ENCODE measurements at regions of chr1 and their contacts with region 1.

Region 1: GRCh38 chr1:203326830-203327683 is 21.7 kb downstream of the BTG2 start:
- DNase-seq: peak; percentile 95
- ATAC-seq: peak; percentile 67
- H3K4me3 ChIP-seq: peak overlapping the region; percentile 35 to 77 (median 56)
- H3K4me3 Mint-ChIP-seq: peak overlapping the region; percentile 88
- H3K27ac ChIP-seq: peak overlapping the region; percentile 96 to 97
- H3K27ac Mint-ChIP-seq: peak overlapping the region; percentile 98
- H3K4me1 ChIP-seq: peaks cover 56 to 62% of the 10 kb centered on the region in 2 donors
- H3K4me1 Mint-ChIP-seq: peaks cover 71% of the 10 kb centered on the region
- H3K27me3 ChIP-seq: no peaks in the 10 kb centered on the region
- H3K27me3 Mint-ChIP-seq: no peaks in the 10 kb centered on the region
- CTCF ChIP-seq: no peak

Region 2: GRCh38 chr1:203290261-203291089 is 36.6 kb before region 1 on chr1:
- CTCF ChIA-PET with region 1: interaction called, 1,776 read pairs
- POLR2A ChIA-PET with region 1: interaction called, 268 read pairs
- intact Hi-C with region 1: loop called (anchors 1 kb)
- DNase-seq: peak; percentile 98
- ATAC-seq: peak; percentile 40
- H3K4me3 ChIP-seq: peak overlapping the region; percentile 45 to 66 (median 56)
- H3K4me3 Mint-ChIP-seq: peak overlapping the region; percentile 88
- H3K27ac ChIP-seq: peak overlapping the region; percentile 99 to 100
- H3K27ac Mint-ChIP-seq: peak overlapping the region; percentile 95
- H3K4me1 ChIP-seq: peaks cover 70 to 90% of the 10 kb centered on the region in 2 donors
- H3K4me1 Mint-ChIP-seq: peaks cover 87% of the 10 kb centered on the region
- H3K27me3 ChIP-seq: no peaks in the 10 kb centered on the region
- H3K27me3 Mint-ChIP-seq: no peaks in the 10 kb centered on the region
- CTCF ChIP-seq: no peak

Region 3: DNA sequence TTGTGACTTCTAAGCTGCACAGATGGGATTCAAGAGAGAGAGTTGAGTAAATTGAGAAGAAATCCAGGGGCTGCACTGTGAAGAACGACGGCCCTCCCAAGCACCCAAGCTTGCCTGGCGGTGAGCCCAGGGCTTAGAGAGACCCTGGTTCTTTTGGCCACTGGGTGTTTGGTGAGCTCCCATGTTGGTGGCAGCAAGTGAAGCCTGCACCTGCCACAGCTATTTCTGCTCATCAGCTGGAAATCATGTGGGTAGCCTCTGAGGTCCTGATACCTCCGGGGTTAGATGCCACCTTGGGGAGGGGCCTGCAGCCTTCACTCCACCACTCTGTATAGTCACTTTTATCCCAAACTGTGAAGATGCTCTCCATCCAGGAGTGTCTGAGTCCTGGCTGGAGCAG is 27.9 kb before region 1 on chr1:
- CTCF ChIA-PET with region 1: interaction called, 1,776 read pairs
- POLR2A ChIA-PET with region 1: interaction called, 68 read pairs
- intact Hi-C with region 1: no loop called
- DNase-seq: peak; percentile 79
- ATAC-seq: peak; percentile 70
- H3K4me3 ChIP-seq: peak overlapping the region in 3 of 5 experiments; percentile 4 to 26 (median 5)
- H3K4me3 Mint-ChIP-seq: peak overlapping the region; percentile 68
- H3K27ac ChIP-seq: peak overlapping the region; percentile 76 to 87
- H3K27ac Mint-ChIP-seq: peak overlapping the region; percentile 93
- H3K4me1 ChIP-seq: peaks cover 87 to 100% of the 10 kb centered on the region in 2 donors
- H3K4me1 Mint-ChIP-seq: peaks cover 91% of the 10 kb centered on the region
- H3K27me3 ChIP-seq: no peaks in the 10 kb centered on the region
- H3K27me3 Mint-ChIP-seq: no peaks in the 10 kb centered on the region
- CTCF ChIP-seq: no peak

Region 4: GRCh38 chr1:203304919-203305808 is 21.9 kb before region 1 on chr1 and contains the start of gene BTG2:
- CTCF ChIA-PET with region 1: interaction called, 361 read pairs
- POLR2A ChIA-PET with region 1: interaction called, 687 read pairs
- intact Hi-C with region 1: loop called (anchors 1 kb)
- DNase-seq: peak; percentile 96
- ATAC-seq: peak; percentile 80
- H3K4me3 ChIP-seq: peak within 1 kb of the TSS; percentile 96 to 99 (median 99)
- H3K4me3 Mint-ChIP-seq: peak within 1 kb of the TSS; percentile 99
- H3K27ac ChIP-seq: peak within 1 kb of the TSS; percentile 100
- H3K27ac Mint-ChIP-seq: peak within 1 kb of the TSS; percentile 99
- H3K4me1 ChIP-seq: peaks cover 65 to 78% of the 10 kb centered on the region in 2 donors
- H3K4me1 Mint-ChIP-seq: peaks cover 70% of the 10 kb centered on the region
- H3K27me3 ChIP-seq: no peaks in the 10 kb centered on the region
- H3K27me3 Mint-ChIP-seq: no peaks in the 10 kb centered on the region
- CTCF ChIP-seq: no peak
- total RNA-seq, gene BTG2: 505 and 508 TPM in 2 replicates

Region 5: GRCh38 chr1:203381151-203381751 is 54.2 kb after region 1 on chr1:
- CTCF ChIA-PET with region 1: no interaction called
- POLR2A ChIA-PET with region 1: interaction called, 3 read pairs
- intact Hi-C with region 1: loop called (anchors 1 kb)
- DNase-seq: peak; percentile 82
- ATAC-seq: peak; percentile 89
- H3K4me3 ChIP-seq: peak overlapping the region in 2 of 5 experiments; percentile 34 to 49
- H3K4me3 Mint-ChIP-seq: peak overlapping the region; percentile 72
- H3K27ac ChIP-seq: peak overlapping the region; percentile 73 to 82
- H3K27ac Mint-ChIP-seq: peak overlapping the region; percentile 76
- H3K4me1 ChIP-seq: peaks cover 38 to 45% of the 10 kb centered on the region in 2 donors
- H3K4me1 Mint-ChIP-seq: peaks cover 45% of the 10 kb centered on the region
- H3K27me3 ChIP-seq: no peaks in the 10 kb centered on the region
- H3K27me3 Mint-ChIP-seq: no peaks in the 10 kb centered on the region
- CTCF ChIP-seq: no peak

Measured in B cell (primary cell).